ENCODE measurements at regions of chr2 and their contacts with region 1.

Region 1: DNA sequence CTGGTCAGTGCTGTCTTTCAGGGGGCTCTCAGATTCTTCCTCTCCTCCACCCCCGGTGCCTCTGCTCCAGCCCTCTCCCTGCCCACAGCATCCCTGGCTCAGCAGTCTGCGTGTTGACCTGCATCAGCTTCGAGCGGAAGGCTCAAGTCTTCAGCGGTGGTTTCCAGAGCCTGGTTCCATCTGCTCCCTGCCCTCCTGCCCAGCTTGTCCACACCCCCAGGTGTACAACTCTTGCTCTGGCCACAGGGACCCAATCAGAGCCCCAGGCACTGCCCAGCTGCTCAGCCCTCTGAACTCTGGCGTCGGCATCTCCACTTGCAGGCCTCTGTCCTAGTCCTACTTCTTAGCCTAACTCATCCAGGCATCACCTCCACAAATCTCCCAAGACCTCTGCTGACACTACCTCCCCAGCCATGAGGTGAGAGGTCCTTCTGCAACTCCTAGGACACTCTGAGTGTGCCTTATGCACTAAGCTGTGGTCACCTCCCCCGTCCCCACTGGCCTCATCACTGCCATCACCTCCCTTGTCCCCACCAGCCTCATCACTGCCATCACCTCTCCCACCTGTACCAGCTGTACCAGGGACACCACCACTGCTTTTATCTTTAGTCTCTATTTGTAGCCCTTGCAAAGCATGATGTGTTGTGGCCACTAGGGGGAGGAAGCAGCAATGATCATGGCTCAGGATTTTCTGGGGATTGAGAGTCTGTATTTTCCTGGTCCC is 60.9 kb downstream of the EDAR start:
- DNase-seq: peak; percentile 79
- H3K4me3 ChIP-seq: no peak overlapping the region; a peak in 1 of 4 replicates
- H3K27ac ChIP-seq: no peak overlapping the region
- H3K4me1 ChIP-seq: peaks cover 0 to 7% of the 10 kb centered on the region in 2 experiments; a peak in 1 of 4 replicates
- H3K27me3 ChIP-seq: peaks cover 4% of the 10 kb centered on the region; the same call in 1 of the 2 replicates
- CTCF ChIP-seq: peak; percentile 88
- EP300 ChIP-seq: no peak
- RAD21 ChIP-seq: peak; percentile 80

Region 2: GRCh38 chr2:108916796-108917421 is 11.2 kb before region 1 on chr2:
- CTCF ChIA-PET with region 1: interaction called, 14 read pairs
- POLR2A ChIA-PET with region 1: interaction called, 3 read pairs
- DNase-seq: no peak
- H3K4me3 ChIP-seq: no peak overlapping the region
- H3K27ac ChIP-seq: no peak overlapping the region
- H3K4me1 ChIP-seq: no peaks in the 10 kb centered on the region; a peak in 1 of 4 replicates
- H3K27me3 ChIP-seq: peaks cover 4% of the 10 kb centered on the region; the same call in 1 of the 2 replicates
- CTCF ChIP-seq: no peak
- EP300 ChIP-seq: no peak
- RAD21 ChIP-seq: no peak

Region 3: DNA sequence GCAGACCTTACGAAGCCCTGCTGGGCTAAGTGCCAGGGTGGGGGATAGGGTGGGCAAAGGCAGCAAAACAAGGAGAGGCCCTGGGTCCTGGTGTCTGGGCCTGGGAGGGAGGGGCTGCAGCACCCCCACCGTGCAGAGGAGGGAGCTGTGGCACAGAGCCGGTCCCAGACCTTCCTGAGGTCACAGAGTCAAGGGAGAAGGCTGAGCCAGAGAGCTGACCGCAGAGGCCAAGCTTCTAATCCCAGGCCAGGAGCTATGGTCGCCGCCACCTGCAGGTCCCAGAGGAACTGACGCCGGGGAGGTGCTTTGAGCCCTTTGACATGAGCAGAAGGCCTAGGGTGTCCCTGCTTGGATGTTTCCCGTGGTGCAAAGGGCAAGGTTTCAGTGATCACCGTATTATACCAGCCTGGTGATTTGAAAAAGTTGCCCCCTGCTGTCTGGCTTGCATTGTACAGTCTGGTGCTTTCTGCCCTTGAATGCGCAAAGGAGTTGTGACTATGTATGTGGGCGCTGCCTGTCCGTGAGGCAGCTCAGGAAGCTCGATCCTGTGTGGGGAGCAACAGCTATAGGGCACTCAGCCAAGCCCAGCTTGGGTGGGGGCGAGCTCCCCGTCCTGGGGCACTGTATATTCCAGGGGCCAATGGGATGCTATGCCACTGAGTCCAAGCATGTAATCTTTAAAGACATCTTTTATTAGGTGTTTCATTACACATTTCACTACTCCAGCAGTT is 16.7 kb after region 1 on chr2:
- CTCF ChIA-PET with region 1: interaction called, 17 read pairs
- POLR2A ChIA-PET with region 1: no interaction called
- DNase-seq: no peak
- H3K4me3 ChIP-seq: no peak overlapping the region
- H3K27ac ChIP-seq: no peak overlapping the region
- H3K4me1 ChIP-seq: no peaks in the 10 kb centered on the region
- H3K27me3 ChIP-seq: peaks cover 6% of the 10 kb centered on the region; the same call in 1 of the 2 replicates
- CTCF ChIP-seq: no peak
- EP300 ChIP-seq: no peak
- RAD21 ChIP-seq: no peak

Region 4: GRCh38 chr2:109069331-109070194 is 141.5 kb after region 1 on chr2:
- CTCF ChIA-PET with region 1: no interaction called
- POLR2A ChIA-PET with region 1: no interaction called
- DNase-seq: no peak
- H3K4me3 ChIP-seq: no peak overlapping the region
- H3K27ac ChIP-seq: no peak overlapping the region
- H3K4me1 ChIP-seq: no peaks in the 10 kb centered on the region
- H3K27me3 ChIP-seq: peaks cover 5% of the 10 kb centered on the region; the same call in 1 of the 2 replicates
- CTCF ChIP-seq: no peak
- EP300 ChIP-seq: no peak
- RAD21 ChIP-seq: no peak